Mammary epithelial cell (primary cell): ENCODE measurements at regions of chr2 and their contacts with region 1.

Region 1: GRCh38 chr2:188773075-188773474 is 201.1 kb upstream of the COL3A1 start:
- DNase-seq: peak; percentile 70
- H3K4me3 ChIP-seq: no peak overlapping the region
- H3K27ac ChIP-seq: no peak overlapping the region
- H3K4me1 ChIP-seq: peaks cover 3% of the 10 kb centered on the region
- H3K27me3 ChIP-seq: no peaks in the 10 kb centered on the region
- CTCF ChIP-seq: no peak

Region 2: GRCh38 chr2:188573453-188573852 is 199.6 kb before region 1 on chr2:
- CTCF ChIA-PET with region 1: no interaction called
- dilution Hi-C with region 1: no loop called
- in situ Hi-C with region 1: no loop called
- intact Hi-C with region 1: no loop called
- DNase-seq: no peak
- H3K4me3 ChIP-seq: no peak overlapping the region
- H3K27ac ChIP-seq: no peak overlapping the region
- H3K4me1 ChIP-seq: no peaks in the 10 kb centered on the region
- H3K27me3 ChIP-seq: no peaks in the 10 kb centered on the region
- CTCF ChIP-seq: no peak

Region 3: GRCh38 chr2:188798159-188798558 is 25.1 kb after region 1 on chr2:
- CTCF ChIA-PET with region 1: no interaction called
- dilution Hi-C with region 1: no loop called
- in situ Hi-C with region 1: no loop called
- intact Hi-C with region 1: no loop called
- DNase-seq: no peak
- H3K4me3 ChIP-seq: no peak overlapping the region
- H3K27ac ChIP-seq: no peak overlapping the region
- H3K4me1 ChIP-seq: no peaks in the 10 kb centered on the region
- H3K27me3 ChIP-seq: no peaks in the 10 kb centered on the region
- CTCF ChIP-seq: no peak

Region 4: GRCh38 chr2:188811522-188811921 is 38.4 kb after region 1 on chr2:
- CTCF ChIA-PET with region 1: no interaction called
- dilution Hi-C with region 1: no loop called
- in situ Hi-C with region 1: no loop called
- intact Hi-C with region 1: loop called (anchors 5 kb)
- DNase-seq: peak; percentile 67
- H3K4me3 ChIP-seq: no peak overlapping the region
- H3K27ac ChIP-seq: no peak overlapping the region
- H3K4me1 ChIP-seq: no peaks in the 10 kb centered on the region
- H3K27me3 ChIP-seq: no peaks in the 10 kb centered on the region
- CTCF ChIP-seq: no peak

Region 5: DNA sequence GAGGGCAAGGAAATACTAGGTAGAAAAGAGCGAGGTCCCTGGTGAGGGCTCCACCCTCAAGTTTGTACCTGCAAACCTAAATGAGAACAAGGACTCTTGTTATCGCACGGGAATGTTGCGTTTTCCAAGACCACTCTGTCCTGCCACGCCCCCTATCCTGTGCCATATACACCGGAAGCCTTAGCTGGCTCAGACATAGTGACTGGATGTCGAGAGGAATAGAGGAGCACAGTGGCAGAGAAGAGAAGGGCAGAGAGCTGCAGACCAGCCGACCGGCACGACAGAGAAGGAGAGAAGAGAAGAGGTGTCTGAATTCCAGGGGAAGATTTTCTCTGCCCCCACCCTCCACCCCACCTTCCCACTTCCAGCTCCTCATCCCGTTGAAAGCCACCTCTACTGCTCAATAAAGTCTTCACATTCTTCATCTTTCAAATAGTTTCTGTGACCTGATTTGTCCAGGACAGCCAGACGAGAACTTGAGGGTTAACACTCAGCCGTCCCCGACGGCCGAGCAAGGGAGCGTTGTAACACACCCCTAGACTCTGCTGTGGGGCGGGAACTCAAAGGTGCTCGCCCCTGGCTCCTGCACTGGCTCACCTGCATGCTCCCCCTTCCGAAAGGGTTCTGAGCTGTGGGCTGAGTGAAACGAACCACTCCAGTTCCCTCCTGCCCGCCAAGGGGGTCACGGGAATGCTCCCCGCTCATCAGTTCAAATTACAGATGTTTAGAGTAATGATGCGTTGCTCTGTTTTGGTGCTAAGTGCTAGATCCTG is 176.2 kb after region 1 on chr2:
- CTCF ChIA-PET with region 1: no interaction called
- dilution Hi-C with region 1: no loop called
- in situ Hi-C with region 1: no loop called
- intact Hi-C with region 1: no loop called
- DNase-seq: no peak
- H3K4me3 ChIP-seq: no peak overlapping the region
- H3K27ac ChIP-seq: no peak overlapping the region
- H3K4me1 ChIP-seq: no peaks in the 10 kb centered on the region
- H3K27me3 ChIP-seq: no peaks in the 10 kb centered on the region
- CTCF ChIP-seq: no peak